HCT116 (cell line): ENCODE measurements at regions of chr3 and their contacts with region 1.

Region 1: GRCh38 chr3:46078712-46079400 is 51.6 kb upstream of the XCR1 start:
- DNase-seq: peak; percentile 91
- ATAC-seq: peak; percentile 99
- H3K4me3 ChIP-seq: peak overlapping the region in 1 of 2 experiments; percentile 25; a peak in 2 of 4 replicates
- H3K27ac ChIP-seq: no peak overlapping the region
- H3K4me1 ChIP-seq: peaks cover 0 to 19% of the 10 kb centered on the region in 2 experiments; a peak in 1 of 4 replicates
- H3K27me3 ChIP-seq: no peaks in the 10 kb centered on the region
- CTCF ChIP-seq: peak; percentile 95 to 100 (median 100)
- POLR2A ChIP-seq: no peak
- RAD21 ChIP-seq: peak; percentile 99

Region 2: GRCh38 chr3:45760878-45761711 is 317.8 kb before region 1 on chr3:
- CTCF ChIA-PET with region 1: interaction called, 6 read pairs
- POLR2A ChIA-PET with region 1: no interaction called
- RAD21 ChIA-PET with region 1: no interaction called
- intact Hi-C with region 1: loop called (anchors 1 kb)
- DNase-seq: peak; percentile 51
- ATAC-seq: peak; percentile 98
- H3K4me3 ChIP-seq: no peak overlapping the region
- H3K27ac ChIP-seq: no peak overlapping the region
- H3K4me1 ChIP-seq: peaks cover 10 to 18% of the 10 kb centered on the region in 2 experiments; a peak in 3 of 4 replicates
- H3K27me3 ChIP-seq: no peaks in the 10 kb centered on the region
- CTCF ChIP-seq: peak; percentile 86 to 89 (median 88)
- POLR2A ChIP-seq: no peak
- RAD21 ChIP-seq: peak; percentile 96

Region 3: GRCh38 chr3:46068501-46068900 is 10.4 kb before region 1 on chr3:
- CTCF ChIA-PET with region 1: interaction called, 10 read pairs
- POLR2A ChIA-PET with region 1: no interaction called
- RAD21 ChIA-PET with region 1: interaction called in 1 of 2 experiments, 4 read pairs
- intact Hi-C with region 1: no loop called
- DNase-seq: no peak
- ATAC-seq: no peak
- H3K4me3 ChIP-seq: no peak overlapping the region
- H3K27ac ChIP-seq: no peak overlapping the region
- H3K4me1 ChIP-seq: peaks cover 9 to 11% of the 10 kb centered on the region in 2 experiments; a peak in 3 of 4 replicates
- H3K27me3 ChIP-seq: peaks cover 14% of the 10 kb centered on the region; the same call in 1 of the 2 replicates
- CTCF ChIP-seq: no peak
- POLR2A ChIP-seq: no peak
- RAD21 ChIP-seq: no peak

Region 4: DNA sequence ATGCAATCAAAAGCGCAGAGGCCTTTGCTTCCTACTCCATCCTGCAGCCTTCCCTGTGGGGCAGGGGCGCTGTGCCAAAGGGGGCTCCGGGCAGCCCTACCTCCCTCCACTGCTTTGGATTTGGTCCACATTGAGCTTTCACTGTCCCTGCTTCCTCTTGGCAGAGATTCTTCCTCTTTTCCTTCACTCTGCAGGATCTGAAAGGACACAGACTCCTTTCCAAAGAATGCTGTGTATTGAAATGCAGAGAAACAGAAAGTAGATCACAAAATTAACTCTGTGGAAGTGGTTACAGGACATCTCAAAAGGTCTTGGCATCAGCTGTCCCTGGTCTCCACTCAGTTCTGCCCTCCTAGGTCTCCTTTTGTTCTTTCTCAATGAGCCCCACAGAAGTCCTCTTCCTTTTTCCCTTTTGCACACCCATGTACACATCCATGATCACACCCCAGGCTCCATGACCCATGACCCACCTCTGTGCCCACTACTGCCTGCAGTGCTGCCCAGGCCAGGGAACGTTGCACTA is 65.2 kb after region 1 on chr3:
- CTCF ChIA-PET with region 1: no interaction called
- POLR2A ChIA-PET with region 1: no interaction called
- RAD21 ChIA-PET with region 1: no interaction called
- intact Hi-C with region 1: no loop called
- DNase-seq: no peak
- ATAC-seq: no peak
- H3K4me3 ChIP-seq: no peak overlapping the region
- H3K27ac ChIP-seq: no peak overlapping the region
- H3K4me1 ChIP-seq: no peaks in the 10 kb centered on the region
- H3K27me3 ChIP-seq: no peaks in the 10 kb centered on the region
- CTCF ChIP-seq: no peak
- POLR2A ChIP-seq: no peak
- RAD21 ChIP-seq: no peak

Region 5: DNA sequence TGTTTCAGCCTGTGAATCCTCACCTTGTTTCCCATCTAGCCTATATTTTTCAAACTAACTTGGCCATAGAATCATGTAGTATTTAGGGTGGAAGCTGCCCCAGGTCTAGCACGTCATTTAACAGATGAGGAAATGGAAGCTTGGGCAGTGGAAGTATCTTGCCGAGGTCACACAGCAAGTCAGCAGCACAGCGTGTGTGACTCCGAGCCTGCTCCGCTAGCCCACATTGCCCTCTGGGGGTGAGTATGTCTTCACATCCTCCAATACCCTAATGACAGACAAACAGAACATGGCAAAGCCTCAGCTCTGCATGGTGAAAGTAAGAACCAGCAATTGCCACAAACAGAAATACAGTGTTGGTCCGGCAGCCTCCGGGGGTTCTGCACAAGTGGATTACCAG is 289.7 kb after region 1 on chr3:
- CTCF ChIA-PET with region 1: interaction called, 30 read pairs
- POLR2A ChIA-PET with region 1: no interaction called
- RAD21 ChIA-PET with region 1: no interaction called
- intact Hi-C with region 1: no loop called
- DNase-seq: no peak
- ATAC-seq: peak; percentile 82
- H3K4me3 ChIP-seq: no peak overlapping the region
- H3K27ac ChIP-seq: no peak overlapping the region
- H3K4me1 ChIP-seq: no peaks in the 10 kb centered on the region
- H3K27me3 ChIP-seq: peaks cover 33% of the 10 kb centered on the region
- CTCF ChIP-seq: peak; percentile 36 to 40 (median 38); a peak in 4 of 6 replicates
- POLR2A ChIP-seq: no peak
- RAD21 ChIP-seq: peak; percentile 76